Cardiac septum (tissue), 1 donor: ENCODE measurements at regions of chr9 and their contacts with region 1.

Region 1: GRCh38 chr9:131464354-131465000 is 38.2 kb upstream of the POMT1 start:
- DNase-seq: peak; percentile 44

Region 2: DNA sequence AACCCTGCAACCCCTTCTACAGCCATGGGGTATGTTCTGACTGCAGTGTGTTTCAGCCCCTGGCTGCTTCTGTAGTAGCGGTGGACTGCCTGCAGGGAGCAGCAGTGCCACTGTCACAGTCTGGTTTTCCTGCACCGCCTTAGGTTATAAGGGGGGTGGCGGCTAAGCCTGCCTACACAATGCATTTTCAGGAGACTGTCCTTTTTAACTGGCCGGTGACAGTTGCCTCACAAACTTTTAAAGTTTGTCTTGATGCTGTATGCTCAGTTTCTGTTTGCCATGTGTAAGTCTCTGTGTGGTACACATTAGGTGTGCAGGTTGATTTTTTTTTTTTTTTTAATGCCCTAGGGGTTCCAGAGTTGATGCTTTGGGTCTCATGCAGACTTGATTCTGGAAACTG is 286.1 kb before region 1 on chr9:
- intact Hi-C with region 1: loop called (anchors 10 kb)
- DNase-seq: peak; percentile 87